ENCODE measurements at regions of chr1 and their contacts with region 1.

Region 1: DNA sequence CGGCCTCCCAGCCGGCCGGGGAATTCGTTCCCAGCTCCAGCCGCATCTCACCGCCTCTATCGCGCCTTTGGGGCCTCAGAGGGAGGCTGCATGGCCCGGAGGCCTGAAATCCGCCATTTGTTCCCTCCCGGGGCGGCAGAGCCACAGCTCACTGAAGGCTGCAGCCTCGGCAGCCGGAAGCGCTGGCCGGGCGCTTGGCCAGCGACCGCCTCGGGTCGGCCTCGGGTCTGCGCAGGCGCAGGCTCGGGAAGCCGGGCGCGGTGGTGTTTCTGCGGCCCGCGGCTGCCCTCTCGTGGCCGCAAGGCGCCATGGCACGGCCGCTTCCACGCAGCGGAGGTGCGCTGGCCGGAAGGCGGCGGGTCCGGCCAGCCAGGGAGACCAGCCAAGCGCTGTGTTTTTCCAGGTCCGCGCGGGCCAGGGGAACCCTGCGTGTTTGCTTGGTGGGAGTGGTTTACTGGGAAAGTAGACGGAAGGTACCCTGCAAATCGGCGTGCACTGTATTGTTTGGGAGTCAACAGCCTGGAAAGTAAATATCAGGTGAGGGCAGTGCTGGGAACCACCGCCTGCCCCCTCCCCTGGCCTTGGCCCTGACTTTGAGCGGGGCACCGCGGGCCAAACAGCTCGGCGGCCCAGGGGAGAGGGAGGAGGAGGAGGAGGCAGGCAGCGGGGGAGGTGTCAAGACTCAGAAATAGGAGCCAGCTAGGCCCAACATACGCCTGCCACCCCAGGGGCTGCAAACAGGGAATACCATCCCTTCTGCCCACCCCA is 52.7 kb upstream of the CD34 start:
- DNase-seq: peak; percentile 94
- ATAC-seq: peak; percentile 88
- H3K4me3 Mint-ChIP-seq: peak overlapping the region; percentile 79
- H3K27ac Mint-ChIP-seq: peak overlapping the region; percentile 76
- H3K4me1 Mint-ChIP-seq: peaks cover 8% of the 10 kb centered on the region
- H3K27me3 Mint-ChIP-seq: peaks cover 38% of the 10 kb centered on the region

Region 2: DNA sequence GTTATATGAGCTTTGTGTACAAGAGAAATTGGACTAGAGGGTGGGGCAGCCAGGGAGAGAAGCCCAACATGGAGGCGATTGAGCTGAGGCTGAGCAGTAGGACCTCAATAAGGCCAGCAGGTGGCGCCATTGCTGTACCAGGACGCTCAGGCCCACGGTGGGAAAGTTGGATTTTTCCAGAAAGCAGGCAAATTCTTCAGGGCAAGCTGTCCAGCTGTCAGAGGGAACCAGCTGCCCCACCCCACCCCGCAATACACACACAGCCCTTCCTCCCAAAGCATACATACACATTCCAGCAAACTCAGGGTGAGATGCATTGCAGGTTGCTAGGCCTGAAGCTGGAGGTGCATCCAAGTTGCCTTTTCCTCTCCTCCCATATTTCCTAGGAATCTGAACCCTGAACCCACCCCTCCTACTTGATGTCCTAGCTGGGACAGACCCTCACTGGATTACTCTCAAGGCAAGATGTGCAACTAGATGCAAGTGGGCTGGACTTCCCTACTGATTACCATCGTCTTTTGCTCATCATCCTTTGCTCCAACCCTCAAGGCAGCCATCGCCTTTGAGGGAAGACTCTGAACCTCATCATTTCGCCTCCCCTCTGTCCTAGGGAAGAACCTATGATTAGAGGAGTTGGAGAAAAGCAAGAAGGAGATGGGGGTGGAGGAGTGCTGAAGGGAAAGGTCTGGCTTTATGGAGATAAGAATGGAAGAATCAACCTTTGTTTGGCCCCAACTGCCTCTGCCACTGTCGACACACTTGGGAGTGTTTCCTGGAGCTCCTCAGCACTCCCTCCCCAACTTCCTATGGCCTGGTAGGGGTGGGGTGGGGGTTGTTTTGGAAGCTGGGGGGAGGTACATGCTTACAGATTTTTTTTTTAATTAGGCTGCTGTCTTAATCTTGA is 78.2 kb before region 1 on chr1:
- POLR2A ChIA-PET with region 1: interaction called, 10 read pairs
- DNase-seq: peak; percentile 75
- ATAC-seq: peak; percentile 62
- H3K4me3 Mint-ChIP-seq: no peak overlapping the region
- H3K27ac Mint-ChIP-seq: peak overlapping the region; percentile 96
- H3K4me1 Mint-ChIP-seq: peaks cover 31% of the 10 kb centered on the region
- H3K27me3 Mint-ChIP-seq: peaks cover 2% of the 10 kb centered on the region